PC-3 (cell line): ENCODE measurements at regions of chr6 and their contacts with region 1.

Region 1: GRCh38 chr6:36765594-36766398 is 68.2 kb downstream of the RAB44 start:
- DNase-seq: peak; percentile 90
- ATAC-seq: peak; percentile 75
- H3K4me3 ChIP-seq: no peak overlapping the region
- H3K27ac ChIP-seq: no peak overlapping the region
- H3K4me1 ChIP-seq: peaks cover 25% of the 10 kb centered on the region
- H3K27me3 ChIP-seq: no peaks in the 10 kb centered on the region
- CTCF ChIP-seq: peak; percentile 97

Region 2: DNA sequence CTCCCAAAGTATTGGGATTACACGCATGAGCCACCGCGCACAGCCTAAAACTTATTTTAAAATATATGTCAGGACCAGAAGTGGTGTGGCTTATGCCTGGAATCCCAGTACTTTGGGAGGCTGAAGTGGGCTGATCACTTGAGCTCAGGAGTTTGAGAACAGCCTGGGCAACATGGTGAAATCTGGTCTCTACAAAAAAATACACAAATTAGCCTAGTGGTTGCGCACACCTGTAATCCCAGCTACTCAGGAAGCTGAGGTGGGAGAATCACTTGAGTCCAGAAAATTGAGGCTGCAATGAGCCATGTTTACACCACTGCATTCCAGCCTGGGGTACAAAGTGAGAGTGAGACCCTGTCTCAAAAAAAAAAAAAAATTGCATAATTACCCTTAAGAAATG is 336.9 kb before region 1 on chr6:
- CTCF ChIA-PET with region 1: no interaction called
- POLR2A ChIA-PET with region 1: no interaction called
- intact Hi-C with region 1: no loop called
- DNase-seq: no peak
- ATAC-seq: no peak
- H3K4me3 ChIP-seq: no peak overlapping the region
- H3K27ac ChIP-seq: no peak overlapping the region
- H3K4me1 ChIP-seq: peaks cover 11% of the 10 kb centered on the region
- H3K27me3 ChIP-seq: no peaks in the 10 kb centered on the region
- CTCF ChIP-seq: no peak

Region 3: GRCh38 chr6:36514554-36515456 is 251.0 kb before region 1 on chr6:
- CTCF ChIA-PET with region 1: no interaction called
- POLR2A ChIA-PET with region 1: no interaction called
- intact Hi-C with region 1: no loop called
- DNase-seq: no peak
- ATAC-seq: no peak
- H3K4me3 ChIP-seq: no peak overlapping the region
- H3K27ac ChIP-seq: no peak overlapping the region
- H3K4me1 ChIP-seq: peaks cover 4% of the 10 kb centered on the region; the same call in 1 of the 2 replicates
- H3K27me3 ChIP-seq: no peaks in the 10 kb centered on the region
- CTCF ChIP-seq: no peak

Region 4: DNA sequence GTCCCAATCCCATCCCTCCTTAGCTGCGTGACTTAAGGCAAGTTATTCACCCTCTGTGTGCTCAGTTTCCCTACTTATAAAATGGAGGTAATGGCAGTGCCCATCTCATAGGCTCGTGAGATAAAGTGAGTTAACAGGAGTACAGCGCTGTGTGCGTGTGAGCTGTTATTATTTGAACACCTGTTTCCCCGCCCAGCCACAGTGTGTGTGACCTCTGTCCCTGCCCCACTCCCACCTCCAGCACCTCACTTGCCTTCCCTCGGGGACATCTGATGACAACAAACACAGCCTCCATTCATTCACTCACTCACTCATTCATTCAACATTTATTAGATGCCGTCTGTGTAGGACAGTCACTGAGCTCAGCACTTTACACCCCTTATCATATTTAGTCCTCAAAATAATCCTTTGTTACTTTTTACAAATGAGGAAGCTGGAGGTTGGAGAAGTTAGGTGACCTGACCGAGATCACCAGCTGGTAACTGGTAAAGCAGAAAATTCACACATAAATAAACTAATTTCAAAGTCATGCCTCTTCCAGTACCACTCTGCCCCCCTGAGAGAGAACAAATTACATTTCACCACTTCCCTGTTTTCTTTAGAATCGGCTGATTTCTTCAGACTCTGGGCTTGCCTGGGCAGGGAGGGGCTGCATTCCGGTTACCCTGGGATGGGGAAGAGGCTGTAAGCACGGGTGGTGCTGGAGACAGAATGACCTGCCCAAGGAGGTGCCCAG is 14.8 kb after region 1 on chr6:
- CTCF ChIA-PET with region 1: interaction called, 27 read pairs
- POLR2A ChIA-PET with region 1: no interaction called
- intact Hi-C with region 1: loop called (anchors 1 kb)
- DNase-seq: no peak
- ATAC-seq: no peak
- H3K4me3 ChIP-seq: no peak overlapping the region
- H3K27ac ChIP-seq: no peak overlapping the region
- H3K4me1 ChIP-seq: no peaks in the 10 kb centered on the region
- H3K27me3 ChIP-seq: 0 out of 2 replicates have a peak, but pooled peaks cover 10% of the 10 kb centered on the region
- CTCF ChIP-seq: no peak

Region 5: DNA sequence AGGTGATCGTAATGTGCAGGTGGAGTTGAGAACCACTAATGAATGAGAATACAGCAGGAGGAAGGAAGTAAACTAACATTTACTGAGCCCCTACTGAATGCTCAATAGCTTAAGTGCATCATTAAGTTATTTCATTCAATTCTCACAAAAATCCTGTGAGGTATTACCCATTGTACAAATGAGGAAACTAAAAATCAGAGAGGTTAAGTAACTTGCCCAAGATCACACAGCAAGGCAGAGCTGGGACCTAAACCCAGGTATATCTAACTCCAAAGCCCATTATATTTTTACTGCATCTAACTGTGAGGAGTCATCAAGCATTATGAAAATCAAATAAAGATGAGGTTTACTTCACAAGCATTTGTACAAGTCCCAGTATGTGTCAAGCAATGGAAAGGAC is 38.1 kb after region 1 on chr6:
- CTCF ChIA-PET with region 1: no interaction called
- POLR2A ChIA-PET with region 1: no interaction called
- intact Hi-C with region 1: no loop called
- DNase-seq: no peak
- ATAC-seq: no peak
- H3K4me3 ChIP-seq: no peak overlapping the region
- H3K27ac ChIP-seq: no peak overlapping the region
- H3K4me1 ChIP-seq: no peaks in the 10 kb centered on the region
- H3K27me3 ChIP-seq: no peaks in the 10 kb centered on the region
- CTCF ChIP-seq: no peak

Region 6: DNA sequence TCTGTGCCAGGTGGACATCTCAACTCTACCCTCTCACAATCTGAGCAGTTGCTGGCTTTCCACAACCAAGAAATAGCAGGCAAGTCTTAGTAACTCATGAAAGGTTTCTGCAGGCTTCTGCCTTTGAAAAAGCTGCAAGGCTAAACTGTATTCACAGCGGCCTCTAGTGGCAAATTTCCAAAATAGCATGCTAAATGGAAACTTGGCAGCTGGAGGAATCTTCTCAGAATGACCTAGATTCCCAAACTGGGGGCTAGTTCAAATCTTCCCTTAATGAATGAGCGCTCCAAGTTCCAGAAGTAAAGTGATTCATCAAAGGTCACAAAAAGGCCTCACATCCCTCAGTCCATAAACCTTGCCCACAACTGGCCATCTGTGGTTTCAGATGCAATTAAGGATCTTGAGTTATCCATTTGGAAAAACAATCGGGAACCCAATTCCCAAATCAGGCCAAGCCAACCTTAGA is 85.4 kb after region 1 on chr6:
- CTCF ChIA-PET with region 1: no interaction called
- POLR2A ChIA-PET with region 1: interaction called, 4 read pairs
- intact Hi-C with region 1: loop called (anchors 1 kb)
- DNase-seq: peak; percentile 80
- ATAC-seq: peak; percentile 22; the same call in 1 of the 2 replicates
- H3K4me3 ChIP-seq: no peak overlapping the region
- H3K27ac ChIP-seq: no peak overlapping the region
- H3K4me1 ChIP-seq: peaks cover 9% of the 10 kb centered on the region; the same call in 1 of the 2 replicates
- H3K27me3 ChIP-seq: no peaks in the 10 kb centered on the region
- CTCF ChIP-seq: peak; percentile 93

Region 7: DNA sequence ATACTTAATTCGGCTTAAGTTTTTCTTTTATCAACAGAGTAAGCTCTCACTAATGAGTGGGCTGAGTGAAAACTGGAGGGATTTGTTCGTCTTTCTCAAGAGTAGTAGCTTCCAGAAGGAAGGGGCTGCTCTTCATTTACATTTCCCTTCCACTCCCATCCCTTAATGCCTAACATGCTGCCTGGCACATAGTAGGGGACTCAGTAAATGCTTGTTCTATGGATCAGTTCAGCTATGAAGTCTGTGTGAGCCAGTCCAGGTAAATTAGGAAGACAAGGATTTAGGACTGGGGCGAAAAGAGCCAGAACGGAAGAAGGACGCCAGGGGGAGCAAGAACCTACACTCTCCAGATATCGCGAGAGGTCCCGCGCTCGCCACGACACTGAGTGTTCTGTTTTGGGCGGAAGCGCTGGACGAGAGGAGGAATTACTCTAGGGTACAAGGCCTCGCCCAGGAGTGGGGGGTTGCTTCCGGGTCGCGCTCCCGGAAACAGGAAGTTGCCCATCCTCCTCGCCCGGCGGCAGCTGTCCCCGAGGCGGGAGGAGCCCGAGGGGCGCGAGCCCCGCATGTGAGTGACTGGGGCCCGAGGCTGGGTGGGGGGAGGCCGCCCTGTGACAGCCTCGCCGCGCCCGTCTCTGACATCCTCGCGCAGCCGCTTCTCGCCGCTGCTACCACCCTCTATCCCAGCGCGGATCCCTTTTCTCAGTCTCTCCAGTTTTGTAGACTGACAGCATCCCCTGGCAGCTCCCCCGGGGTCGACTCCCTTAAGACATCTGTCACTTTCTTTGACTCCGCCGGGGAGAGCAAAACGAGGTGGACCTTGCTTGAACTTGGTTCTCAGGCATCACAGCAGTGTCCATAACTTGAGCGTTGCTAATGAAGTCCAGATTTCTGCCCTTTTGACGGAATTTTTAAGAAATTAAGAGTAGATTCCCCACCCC is 119.9 kb after region 1 on chr6 and contains the start of gene C6orf89:
- CTCF ChIA-PET with region 1: no interaction called
- POLR2A ChIA-PET with region 1: no interaction called
- intact Hi-C with region 1: no loop called
- DNase-seq: peak; percentile 98
- ATAC-seq: peak; percentile 100
- H3K4me3 ChIP-seq: peak within 1 kb of the TSS; percentile 80
- H3K27ac ChIP-seq: 0 out of 2 replicates have a peak within 1 kb of the TSS, but pooled peaks have one; percentile 10
- H3K4me1 ChIP-seq: peaks cover 11% of the 10 kb centered on the region
- H3K27me3 ChIP-seq: no peaks in the 10 kb centered on the region
- CTCF ChIP-seq: peak; percentile 86
- total RNA-seq, gene C6orf89: 23.2 and 27.8 TPM in 2 replicates